MCF 10A (cell line): ENCODE measurements at regions of chr11 and their contacts with region 1.

Region 1: GRCh38 chr11:30128269-30128932 is 102.4 kb upstream of the FSHB start:
- DNase-seq: peak; percentile 67
- H3K4me3 Mint-ChIP-seq: no peak overlapping the region
- H3K27ac Mint-ChIP-seq: no peak overlapping the region
- H3K4me1 Mint-ChIP-seq: peaks cover 6% of the 10 kb centered on the region
- H3K27me3 Mint-ChIP-seq: no peaks in the 10 kb centered on the region
- CTCF ChIP-seq: peak; percentile 60

Region 2: DNA sequence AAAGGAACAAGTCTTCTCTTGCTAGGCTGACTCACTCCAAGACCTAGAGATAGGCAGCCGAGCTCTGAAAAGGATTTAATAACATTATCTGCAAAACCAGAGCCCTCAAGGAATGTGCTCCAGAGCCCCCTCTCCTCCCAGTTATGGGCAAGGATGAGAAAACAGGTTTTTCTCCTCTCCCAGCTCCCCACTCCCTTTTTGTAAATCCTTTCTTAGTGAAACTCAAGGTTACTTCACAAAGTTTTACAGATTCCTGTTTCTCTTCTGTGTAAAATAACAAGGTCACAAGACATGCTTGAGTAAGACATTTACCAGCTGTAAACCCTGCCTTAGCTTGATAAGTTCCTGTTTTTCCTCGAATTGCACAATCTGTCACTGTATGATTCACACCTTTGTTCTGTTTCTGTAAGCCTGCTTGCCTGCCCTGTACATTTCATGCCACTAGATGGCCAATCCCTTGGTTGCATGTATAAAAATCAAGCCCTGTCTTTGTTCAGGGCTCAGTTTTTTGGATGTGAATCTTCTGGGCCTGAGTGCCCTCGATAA is 600.9 kb before region 1 on chr11:
- CTCF ChIA-PET with region 1: interaction called, 12 read pairs
- POLR2A ChIA-PET with region 1: no interaction called
- intact Hi-C with region 1: no loop called
- DNase-seq: peak; percentile 93
- H3K4me3 Mint-ChIP-seq: peak overlapping the region; percentile 66
- H3K27ac Mint-ChIP-seq: peak overlapping the region; percentile 99
- H3K4me1 Mint-ChIP-seq: peaks cover 9% of the 10 kb centered on the region
- H3K27me3 Mint-ChIP-seq: no peaks in the 10 kb centered on the region
- CTCF ChIP-seq: peak; percentile 38

Region 3: DNA sequence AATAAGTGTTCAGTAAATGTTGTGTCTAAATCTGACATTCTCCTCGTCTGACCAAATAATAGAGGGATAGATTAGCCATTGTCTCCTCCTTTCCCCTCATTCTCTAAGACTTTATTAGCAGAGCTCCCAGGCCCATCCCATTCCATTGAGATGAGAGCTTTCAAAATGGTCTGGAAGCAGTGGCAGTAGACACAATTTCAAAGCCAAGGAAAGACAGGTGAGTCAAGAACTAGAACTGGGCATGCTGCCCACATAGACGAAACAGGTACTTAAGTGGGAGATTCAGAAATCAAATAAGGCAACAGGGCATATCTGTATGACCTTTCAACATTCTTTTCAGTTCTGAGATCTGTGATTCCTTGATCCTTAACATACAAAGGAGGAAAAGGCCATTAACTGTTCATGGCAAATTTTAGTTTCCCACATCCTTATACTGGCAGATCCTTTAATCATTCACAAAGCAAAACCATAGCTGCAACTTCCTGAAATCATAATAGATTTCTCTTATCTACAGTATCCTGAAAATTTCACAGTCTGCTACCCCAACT is 15.0 kb before region 1 on chr11:
- CTCF ChIA-PET with region 1: interaction called, 42 read pairs
- POLR2A ChIA-PET with region 1: interaction called, 5 read pairs
- intact Hi-C with region 1: no loop called
- DNase-seq: peak; percentile 46
- H3K4me3 Mint-ChIP-seq: no peak overlapping the region
- H3K27ac Mint-ChIP-seq: no peak overlapping the region
- H3K4me1 Mint-ChIP-seq: peaks cover 3% of the 10 kb centered on the region
- H3K27me3 Mint-ChIP-seq: no peaks in the 10 kb centered on the region
- CTCF ChIP-seq: no peak

Region 4: GRCh38 chr11:30155428-30155827 is 27.0 kb after region 1 on chr11:
- CTCF ChIA-PET with region 1: interaction called, 20 read pairs
- POLR2A ChIA-PET with region 1: no interaction called
- intact Hi-C with region 1: no loop called
- DNase-seq: no peak
- H3K4me3 Mint-ChIP-seq: no peak overlapping the region
- H3K27ac Mint-ChIP-seq: no peak overlapping the region
- H3K4me1 Mint-ChIP-seq: peaks cover 15% of the 10 kb centered on the region
- H3K27me3 Mint-ChIP-seq: no peaks in the 10 kb centered on the region
- CTCF ChIP-seq: no peak

Region 5: DNA sequence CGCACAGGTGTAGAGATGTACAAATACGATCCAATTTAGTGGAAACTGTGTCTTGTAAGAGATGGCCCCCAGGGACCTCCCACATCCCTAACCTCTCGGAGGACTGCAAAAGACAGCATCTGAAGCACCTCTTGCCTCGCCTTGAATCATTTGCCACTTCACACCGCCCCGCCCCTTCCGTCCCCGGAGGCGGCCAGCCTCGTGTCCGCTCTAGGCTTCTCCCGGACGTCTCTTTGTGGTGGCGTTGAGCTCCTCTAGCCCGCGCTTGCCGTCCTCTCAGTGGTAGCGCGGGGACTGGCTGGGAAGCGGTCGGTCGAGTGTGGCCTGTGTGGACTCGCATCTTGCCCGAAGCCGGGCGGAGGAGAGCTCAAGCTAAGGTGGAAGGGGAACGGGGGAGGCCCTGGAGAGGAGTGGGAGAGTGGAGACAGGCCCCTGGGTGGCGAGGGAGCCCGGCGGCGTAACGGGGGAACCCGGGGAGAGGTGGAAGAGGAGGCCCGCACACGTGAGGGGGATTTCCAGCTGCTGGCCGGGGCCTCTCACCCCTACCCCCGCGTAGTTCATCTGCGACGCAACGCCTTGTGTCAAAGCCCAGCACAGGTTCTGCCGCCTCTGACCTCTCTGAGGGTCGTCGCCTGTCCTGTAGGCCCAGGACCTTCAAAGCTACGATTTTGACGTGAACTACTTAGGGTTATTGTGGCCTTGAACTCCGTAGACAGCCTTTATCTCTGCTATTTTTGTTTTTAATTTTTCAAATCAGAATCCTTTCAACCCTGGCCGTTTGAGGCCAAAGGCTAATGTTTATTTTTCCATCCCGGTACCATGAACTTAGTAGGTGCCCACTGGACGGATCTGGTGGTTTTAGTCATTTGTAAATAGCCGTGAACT is 194.7 kb after region 1 on chr11 and contains the start of gene ARL14EP:
- CTCF ChIA-PET with region 1: interaction called, 275 read pairs
- POLR2A ChIA-PET with region 1: interaction called, 14 read pairs
- intact Hi-C with region 1: no loop called
- DNase-seq: peak; percentile 95
- H3K4me3 Mint-ChIP-seq: peak within 1 kb of the TSS; percentile 96
- H3K27ac Mint-ChIP-seq: peak within 1 kb of the TSS; percentile 99
- H3K4me1 Mint-ChIP-seq: peaks cover 30% of the 10 kb centered on the region
- H3K27me3 Mint-ChIP-seq: peaks cover 21% of the 10 kb centered on the region
- CTCF ChIP-seq: no peak
- total RNA-seq, gene ARL14EP: 25.1 and 28.4 TPM in 2 replicates